Activated naive CD4-positive, alpha-beta T cell treated with anti-CD3 and anti-CD28 coated beads for 36 hours (primary cell): ENCODE measurements at regions of chr19 and their contacts with region 1.

Region 1: DNA sequence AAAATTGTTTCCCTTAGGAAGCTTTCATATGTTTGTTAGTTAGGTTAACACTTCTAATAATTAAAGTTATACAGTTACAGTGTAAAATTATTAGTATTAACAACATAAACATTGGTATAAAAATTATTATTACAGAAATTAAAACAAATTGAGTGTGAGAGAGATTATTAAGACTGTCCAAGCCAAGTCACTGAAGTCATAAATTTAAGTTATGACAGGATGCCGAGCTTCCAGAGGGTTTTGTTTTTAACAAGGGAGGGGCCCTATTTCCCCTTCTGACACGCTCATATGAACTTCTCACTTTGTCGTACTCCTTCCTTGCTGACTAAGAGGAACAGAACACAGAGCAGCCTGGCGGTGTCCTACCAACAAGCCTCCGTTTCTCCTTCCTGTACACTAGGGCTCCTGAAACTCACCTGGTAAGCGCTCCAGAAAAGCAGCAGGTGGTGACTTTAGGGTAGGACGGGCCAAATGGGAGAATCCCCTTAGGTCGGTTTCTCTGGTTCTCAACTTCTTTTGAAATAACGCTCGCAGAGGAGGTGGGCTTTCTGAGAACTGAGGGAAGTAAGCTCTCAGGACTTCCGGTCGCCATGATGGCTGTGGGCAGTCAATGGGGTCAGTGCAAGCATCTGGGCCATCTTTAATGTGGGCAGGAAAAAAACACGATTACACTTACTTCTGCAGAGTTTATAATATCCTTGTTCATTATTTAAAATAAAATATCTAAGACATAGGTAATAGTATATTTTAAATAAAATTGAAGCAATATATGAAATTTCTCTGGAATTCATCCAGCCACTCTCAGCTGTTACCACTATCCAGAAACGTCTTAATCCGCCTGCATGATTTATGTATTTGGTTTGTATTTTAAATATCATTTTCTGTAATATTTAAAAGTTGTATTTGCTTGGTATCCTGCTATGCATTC is at the start of gene CARD8:
- DNase-seq: peak; percentile 88
- H3K4me3 Mint-ChIP-seq: peak within 1 kb of the TSS; percentile 92
- H3K27ac Mint-ChIP-seq: peak within 1 kb of the TSS; percentile 97
- H3K4me1 Mint-ChIP-seq: peaks cover 65% of the 10 kb centered on the region
- H3K27me3 Mint-ChIP-seq: no peaks in the 10 kb centered on the region
- total RNA-seq, gene CARD8: 99.8 to 104 TPM

Region 2: DNA sequence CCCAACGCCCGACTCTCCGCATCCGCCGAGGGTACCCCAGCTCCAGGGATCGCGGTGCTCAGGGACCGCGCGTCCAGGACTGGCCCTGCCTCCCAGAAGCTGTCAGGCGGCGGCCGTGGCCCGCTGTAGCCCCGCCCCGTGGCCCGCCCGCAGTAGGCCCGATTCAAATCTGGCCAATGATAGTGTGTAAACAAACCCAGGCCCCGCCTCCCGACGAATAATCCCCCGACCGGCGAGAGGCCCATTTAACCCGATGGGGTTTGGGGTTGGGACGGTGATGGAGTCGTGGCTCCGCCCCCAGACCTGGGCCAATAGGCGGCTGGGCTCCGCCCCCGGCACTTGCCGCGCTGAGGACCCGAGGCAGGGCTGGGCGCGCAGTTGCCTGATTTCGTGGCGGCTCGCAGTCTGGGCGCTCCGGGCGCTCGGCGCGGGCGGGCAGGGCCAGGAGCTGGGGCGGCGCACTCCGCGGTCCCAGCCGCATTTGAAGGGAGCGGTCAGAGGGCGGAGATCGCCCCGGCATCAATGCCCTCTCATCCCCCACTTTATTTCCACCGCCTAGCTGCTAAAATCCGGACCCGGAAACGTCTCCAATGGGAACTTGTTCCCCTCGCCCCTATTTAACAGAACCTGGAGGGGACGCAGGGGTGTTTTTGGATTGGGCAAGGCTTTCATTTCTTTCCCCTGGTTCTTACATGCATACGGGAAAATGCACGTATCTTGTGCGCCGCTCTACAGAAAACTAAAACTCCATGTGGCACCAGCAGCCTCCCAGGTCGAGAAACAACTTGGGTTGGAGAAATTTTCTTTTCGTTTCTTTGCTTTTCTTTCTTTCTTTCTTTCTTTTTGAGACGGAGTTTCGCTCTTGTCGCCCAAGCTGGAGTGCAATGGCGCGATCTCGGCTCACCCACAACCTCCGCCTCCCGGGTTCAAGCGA is 655.1 kb before region 1 on chr19:
- CTCF ChIA-PET with region 1: no interaction called
- intact Hi-C with region 1: loop called (anchors 5 kb)
- DNase-seq: peak; percentile 100
- H3K4me3 Mint-ChIP-seq: peak overlapping the region; percentile 85
- H3K27ac Mint-ChIP-seq: peak overlapping the region; percentile 88
- H3K4me1 Mint-ChIP-seq: peaks cover 17% of the 10 kb centered on the region
- H3K27me3 Mint-ChIP-seq: no peaks in the 10 kb centered on the region

Region 3: DNA sequence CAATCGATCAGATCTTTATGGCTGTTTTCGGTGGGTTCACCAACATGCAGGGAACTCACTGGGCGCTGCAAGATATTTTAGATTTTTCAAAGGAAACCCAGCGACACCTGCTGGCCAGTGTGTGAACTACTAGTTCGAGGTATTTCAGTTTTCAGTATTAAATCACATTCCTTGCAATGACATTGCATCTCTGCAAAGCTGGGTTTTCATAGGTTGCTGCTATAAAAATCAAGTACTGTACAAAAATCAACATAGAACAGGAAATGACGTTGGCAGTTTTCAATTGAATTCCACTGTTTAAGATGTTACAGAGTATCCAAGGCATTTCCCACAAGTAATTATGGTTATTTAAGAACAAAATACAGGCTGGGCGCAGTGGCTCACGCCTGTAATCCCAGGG is 103.1 kb before region 1 on chr19:
- CTCF ChIA-PET with region 1: no interaction called
- intact Hi-C with region 1: loop called (anchors 1 kb)
- DNase-seq: peak; percentile 79
- H3K4me3 Mint-ChIP-seq: no peak overlapping the region
- H3K27ac Mint-ChIP-seq: no peak overlapping the region
- H3K4me1 Mint-ChIP-seq: no peaks in the 10 kb centered on the region
- H3K27me3 Mint-ChIP-seq: no peaks in the 10 kb centered on the region

Region 4: GRCh38 chr19:48203732-48204628 is 51.7 kb before region 1 on chr19:
- CTCF ChIA-PET with region 1: interaction called, 21 read pairs
- intact Hi-C with region 1: loop called (anchors 1 kb)
- DNase-seq: peak; percentile 96
- H3K4me3 Mint-ChIP-seq: no peak overlapping the region
- H3K27ac Mint-ChIP-seq: no peak overlapping the region
- H3K4me1 Mint-ChIP-seq: peaks cover 21% of the 10 kb centered on the region
- H3K27me3 Mint-ChIP-seq: no peaks in the 10 kb centered on the region

Region 5: GRCh38 chr19:48333467-48334384 is 78.1 kb after region 1 on chr19:
- CTCF ChIA-PET with region 1: interaction called, 9 read pairs
- intact Hi-C with region 1: loop called (anchors 2 kb)
- DNase-seq: peak; percentile 95
- H3K4me3 Mint-ChIP-seq: peak overlapping the region; percentile 87
- H3K27ac Mint-ChIP-seq: peak overlapping the region; percentile 92
- H3K4me1 Mint-ChIP-seq: peaks cover 47% of the 10 kb centered on the region
- H3K27me3 Mint-ChIP-seq: no peaks in the 10 kb centered on the region